ENCODE measurements at regions of chr1 and their contacts with region 1.

Region 1: DNA sequence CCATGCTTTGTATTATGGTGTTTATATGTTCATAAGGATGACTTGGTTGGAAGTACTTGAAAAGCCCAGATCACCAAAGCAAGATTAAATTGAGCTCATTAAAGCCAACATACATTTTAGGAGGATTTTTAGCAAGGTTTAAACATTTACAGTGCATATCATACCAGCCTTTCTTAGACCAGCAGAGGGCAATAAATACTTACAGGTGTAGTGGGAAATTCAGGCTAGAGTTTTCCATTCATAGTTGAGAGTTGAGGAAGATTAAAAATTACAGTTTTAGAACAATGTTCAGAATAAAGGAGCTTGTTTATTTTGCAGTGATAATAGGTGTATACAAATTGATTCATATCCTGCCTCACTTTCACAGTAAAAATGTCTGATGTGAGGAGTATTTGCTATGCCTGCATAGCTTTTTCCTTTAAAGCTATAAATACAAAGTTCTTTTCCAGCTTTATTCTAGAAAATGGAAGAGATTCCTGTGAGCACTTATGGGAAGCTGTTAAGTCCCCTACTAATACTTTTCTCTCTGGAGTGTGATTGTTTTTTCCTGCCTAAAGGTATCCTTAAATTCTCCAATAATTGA is 35.3 kb downstream of the DTL start:
- DNase-seq: no peak
- H3K4me3 Mint-ChIP-seq: no peak overlapping the region
- H3K27ac Mint-ChIP-seq: peak overlapping the region; percentile 32
- H3K4me1 Mint-ChIP-seq: no peaks in the 10 kb centered on the region
- H3K27me3 Mint-ChIP-seq: no peaks in the 10 kb centered on the region

Region 2: GRCh38 chr1:211680752-211681327 is 390.0 kb before region 1 on chr1:
- CTCF ChIA-PET with region 1: interaction called, 15 read pairs
- POLR2A ChIA-PET with region 1: no interaction called
- intact Hi-C with region 1: no loop called
- DNase-seq: peak; percentile 83
- H3K4me3 Mint-ChIP-seq: no peak overlapping the region
- H3K27ac Mint-ChIP-seq: peak overlapping the region; percentile 69
- H3K4me1 Mint-ChIP-seq: peaks cover 9% of the 10 kb centered on the region
- H3K27me3 Mint-ChIP-seq: no peaks in the 10 kb centered on the region

Region 3: DNA sequence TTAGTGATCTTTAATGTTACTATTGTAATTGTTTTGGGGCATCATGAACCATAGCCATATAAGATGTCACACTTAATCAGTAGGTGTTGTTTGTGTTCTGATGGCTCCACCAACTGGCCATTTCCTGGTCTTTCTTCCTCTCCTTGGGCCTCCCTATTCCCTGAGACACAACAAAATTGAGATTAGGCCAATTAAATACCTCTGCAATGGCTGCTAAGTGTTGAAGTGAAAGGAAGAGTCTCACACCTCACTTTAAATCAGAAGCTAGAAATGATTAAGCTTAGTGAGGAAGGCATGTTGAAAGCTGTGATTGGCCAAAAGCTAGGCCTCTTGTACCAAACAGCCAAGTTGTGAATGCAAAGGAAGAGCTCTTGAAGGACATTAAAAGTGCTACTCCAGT is 245.1 kb after region 1 on chr1:
- CTCF ChIA-PET with region 1: interaction called, 9 read pairs
- POLR2A ChIA-PET with region 1: no interaction called
- intact Hi-C with region 1: loop called (anchors 5 kb)
- DNase-seq: peak; percentile 34
- H3K4me3 Mint-ChIP-seq: no peak overlapping the region
- H3K27ac Mint-ChIP-seq: peak overlapping the region; percentile 66
- H3K4me1 Mint-ChIP-seq: peaks cover 47% of the 10 kb centered on the region
- H3K27me3 Mint-ChIP-seq: no peaks in the 10 kb centered on the region

Region 4: GRCh38 chr1:212355230-212355969 is 284.6 kb after region 1 on chr1:
- CTCF ChIA-PET with region 1: interaction called, 10 read pairs
- POLR2A ChIA-PET with region 1: no interaction called
- intact Hi-C with region 1: no loop called
- DNase-seq: no peak
- H3K4me3 Mint-ChIP-seq: no peak overlapping the region
- H3K27ac Mint-ChIP-seq: no peak overlapping the region
- H3K4me1 Mint-ChIP-seq: peaks cover 22% of the 10 kb centered on the region
- H3K27me3 Mint-ChIP-seq: no peaks in the 10 kb centered on the region

Measured in activated CD4-positive, alpha-beta memory T cell treated with anti-CD3 and anti-CD28 coated beads for 36 hours (primary cell).